ENCODE measurements at regions of chr5 and their contacts with region 1.

Region 1: DNA sequence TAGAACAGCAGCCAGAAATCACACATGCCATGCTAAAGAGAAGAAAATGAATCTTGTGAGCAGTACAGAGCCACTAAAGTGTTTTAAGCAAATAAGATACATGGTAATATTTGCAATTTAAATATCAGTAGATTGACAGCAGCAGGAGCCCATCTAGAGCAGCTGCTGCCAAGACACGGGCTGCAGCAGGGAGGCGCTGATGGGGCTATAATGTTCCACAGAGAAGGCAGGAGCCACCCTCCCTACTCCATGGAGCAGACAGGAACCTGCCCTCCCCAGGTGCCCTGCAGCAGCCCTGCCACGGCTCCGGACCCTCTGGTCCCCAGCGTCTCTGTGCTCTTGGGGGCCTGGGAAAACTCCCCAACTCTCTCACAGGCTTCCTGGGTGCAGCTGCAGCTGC is 224.1 kb upstream of the ISL1 start:
- DNase-seq: no peak
- H3K4me3 ChIP-seq: no peak overlapping the region
- H3K27ac ChIP-seq: no peak overlapping the region
- H3K4me1 ChIP-seq: no peaks in the 10 kb centered on the region
- CTCF ChIP-seq: no peak

Region 2: DNA sequence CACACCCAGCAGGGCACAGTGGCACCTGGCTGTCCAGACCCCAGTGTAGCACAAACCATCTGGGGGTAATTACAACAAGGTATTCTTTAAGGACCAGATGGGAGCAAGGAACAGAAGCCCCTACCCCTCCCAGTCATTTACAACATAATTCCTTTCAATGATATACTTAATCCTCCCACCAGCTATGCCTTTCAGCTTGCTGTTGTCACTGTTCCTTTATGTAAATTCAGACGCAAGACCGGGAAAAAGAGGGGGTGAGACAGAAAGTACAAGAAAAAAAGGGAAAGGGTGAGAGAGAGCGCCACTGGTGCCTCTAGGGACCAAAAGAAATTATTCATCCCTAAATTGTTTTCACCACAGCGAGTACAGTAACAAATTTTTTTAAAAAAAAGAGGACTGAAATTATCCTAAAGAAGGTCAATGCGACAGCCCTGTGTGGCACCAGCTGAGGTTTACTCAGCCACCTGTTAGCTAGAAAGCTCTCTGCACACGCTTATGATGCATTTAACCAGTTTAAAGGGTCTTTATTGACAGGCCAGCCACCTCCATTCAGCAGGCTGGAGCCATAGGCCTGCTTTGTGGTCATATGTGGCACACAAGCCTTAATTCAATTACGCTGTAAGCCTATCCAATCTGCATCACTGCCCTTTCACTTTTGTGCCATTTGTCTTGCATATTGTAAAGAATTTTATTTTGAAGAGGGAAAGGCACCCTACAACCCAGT is 13.9 kb after region 1 on chr5:
- CTCF ChIA-PET with region 1: no interaction called
- POLR2A ChIA-PET with region 1: interaction called, 11 read pairs
- intact Hi-C with region 1: no loop called
- DNase-seq: no peak
- H3K4me3 ChIP-seq: no peak overlapping the region
- H3K27ac ChIP-seq: no peak overlapping the region
- H3K4me1 ChIP-seq: no peaks in the 10 kb centered on the region
- CTCF ChIP-seq: no peak

Region 3: GRCh38 chr5:51214746-51215145 is 55.6 kb after region 1 on chr5:
- CTCF ChIA-PET with region 1: no interaction called
- POLR2A ChIA-PET with region 1: no interaction called
- intact Hi-C with region 1: no loop called
- DNase-seq: no peak
- H3K4me3 ChIP-seq: no peak overlapping the region
- H3K27ac ChIP-seq: no peak overlapping the region
- H3K4me1 ChIP-seq: no peaks in the 10 kb centered on the region
- CTCF ChIP-seq: no peak

Region 4: GRCh38 chr5:51279983-51280706 is 121.0 kb after region 1 on chr5:
- CTCF ChIA-PET with region 1: no interaction called
- POLR2A ChIA-PET with region 1: no interaction called
- intact Hi-C with region 1: no loop called
- DNase-seq: no peak
- H3K4me3 ChIP-seq: no peak overlapping the region
- H3K27ac ChIP-seq: no peak overlapping the region
- H3K4me1 ChIP-seq: no peaks in the 10 kb centered on the region
- CTCF ChIP-seq: no peak

Region 5: GRCh38 chr5:52150501-52150900 is 991.3 kb after region 1 on chr5:
- CTCF ChIA-PET with region 1: no interaction called
- POLR2A ChIA-PET with region 1: no interaction called
- intact Hi-C with region 1: no loop called
- DNase-seq: no peak
- H3K4me3 ChIP-seq: no peak overlapping the region
- H3K27ac ChIP-seq: no peak overlapping the region
- H3K4me1 ChIP-seq: no peaks in the 10 kb centered on the region
- CTCF ChIP-seq: no peak